CD8-positive, alpha-beta T cell (primary cell): ENCODE measurements at regions of chr2 and their contacts with region 1.

Region 1: DNA sequence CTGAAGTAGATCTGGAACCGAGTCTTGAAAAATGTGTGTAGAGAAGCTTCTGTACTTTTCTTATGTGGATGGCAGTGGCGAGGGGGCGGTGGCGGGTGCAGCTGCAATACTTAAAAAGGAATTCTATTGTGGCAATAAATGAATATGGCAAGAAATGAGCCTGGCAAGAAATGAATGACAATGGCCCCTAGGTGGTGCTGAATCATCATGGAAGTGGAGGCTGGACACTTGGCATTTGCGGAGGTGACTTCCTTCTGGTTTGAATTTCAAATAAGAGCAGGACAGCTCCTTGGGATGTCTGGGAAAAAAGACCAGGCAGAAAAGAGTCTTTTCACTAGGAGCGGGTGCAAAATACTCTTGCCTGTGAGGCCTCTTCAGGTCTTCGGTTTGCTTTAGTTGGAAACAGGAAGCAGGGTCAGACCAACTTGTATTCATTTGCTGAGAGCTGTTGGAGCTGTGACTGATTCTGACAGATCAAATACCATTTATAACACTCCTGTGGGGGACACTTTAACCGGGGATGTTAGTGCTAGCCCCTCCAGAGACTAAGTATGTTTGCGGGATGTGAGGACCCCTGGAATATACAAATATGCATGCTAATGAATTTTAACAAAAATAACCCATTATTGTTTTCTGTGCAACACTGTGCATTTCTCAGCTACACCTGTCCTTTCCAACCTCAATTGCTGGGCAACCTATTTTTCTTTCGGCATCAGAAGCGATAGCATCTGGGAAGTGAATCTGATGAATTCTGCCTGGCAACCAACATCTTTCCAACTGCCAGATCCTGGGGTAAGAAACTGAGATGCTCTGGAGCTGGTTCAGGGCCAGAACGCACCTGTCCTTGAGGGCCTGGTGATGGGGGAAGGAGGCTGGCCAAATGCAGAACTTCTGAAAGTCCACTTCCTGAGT is 35.4 kb downstream of the FASTKD2 start:
- DNase-seq: peak in 8 of 9 experiments; percentile 13 to 69 (median 43)
- ATAC-seq: peak; percentile 61
- H3K4me3 ChIP-seq: peak overlapping the region; percentile 7 to 17
- H3K4me3 Mint-ChIP-seq: peak overlapping the region; percentile 71
- H3K27ac ChIP-seq: no peak overlapping the region
- H3K27ac Mint-ChIP-seq: no peak overlapping the region
- H3K4me1 ChIP-seq: no peaks in the 10 kb centered on the region
- H3K4me1 Mint-ChIP-seq: peaks cover 18% of the 10 kb centered on the region
- H3K27me3 ChIP-seq: no peaks in the 10 kb centered on the region
- H3K27me3 Mint-ChIP-seq: no peaks in the 10 kb centered on the region
- CTCF ChIP-seq: peak; percentile 70

Region 2: GRCh38 chr2:206721256-206721920 is 79.4 kb before region 1 on chr2:
- CTCF ChIA-PET with region 1: no interaction called
- POLR2A ChIA-PET with region 1: no interaction called
- intact Hi-C with region 1: no loop called
- DNase-seq: no peak
- ATAC-seq: no peak
- H3K4me3 ChIP-seq: no peak overlapping the region
- H3K4me3 Mint-ChIP-seq: no peak overlapping the region
- H3K27ac ChIP-seq: no peak overlapping the region
- H3K27ac Mint-ChIP-seq: no peak overlapping the region
- H3K4me1 ChIP-seq: no peaks in the 10 kb centered on the region
- H3K4me1 Mint-ChIP-seq: no peaks in the 10 kb centered on the region
- H3K27me3 ChIP-seq: no peaks in the 10 kb centered on the region
- H3K27me3 Mint-ChIP-seq: peaks cover 21% of the 10 kb centered on the region
- CTCF ChIP-seq: no peak

Region 3: GRCh38 chr2:206790311-206790935 is 10.3 kb before region 1 on chr2:
- CTCF ChIA-PET with region 1: interaction called, 21 read pairs
- POLR2A ChIA-PET with region 1: no interaction called
- intact Hi-C with region 1: no loop called
- DNase-seq: no peak
- ATAC-seq: no peak
- H3K4me3 ChIP-seq: no peak overlapping the region
- H3K4me3 Mint-ChIP-seq: no peak overlapping the region
- H3K27ac ChIP-seq: no peak overlapping the region
- H3K27ac Mint-ChIP-seq: no peak overlapping the region
- H3K4me1 ChIP-seq: no peaks in the 10 kb centered on the region
- H3K4me1 Mint-ChIP-seq: no peaks in the 10 kb centered on the region
- H3K27me3 ChIP-seq: no peaks in the 10 kb centered on the region
- H3K27me3 Mint-ChIP-seq: no peaks in the 10 kb centered on the region
- CTCF ChIP-seq: no peak

Region 4: DNA sequence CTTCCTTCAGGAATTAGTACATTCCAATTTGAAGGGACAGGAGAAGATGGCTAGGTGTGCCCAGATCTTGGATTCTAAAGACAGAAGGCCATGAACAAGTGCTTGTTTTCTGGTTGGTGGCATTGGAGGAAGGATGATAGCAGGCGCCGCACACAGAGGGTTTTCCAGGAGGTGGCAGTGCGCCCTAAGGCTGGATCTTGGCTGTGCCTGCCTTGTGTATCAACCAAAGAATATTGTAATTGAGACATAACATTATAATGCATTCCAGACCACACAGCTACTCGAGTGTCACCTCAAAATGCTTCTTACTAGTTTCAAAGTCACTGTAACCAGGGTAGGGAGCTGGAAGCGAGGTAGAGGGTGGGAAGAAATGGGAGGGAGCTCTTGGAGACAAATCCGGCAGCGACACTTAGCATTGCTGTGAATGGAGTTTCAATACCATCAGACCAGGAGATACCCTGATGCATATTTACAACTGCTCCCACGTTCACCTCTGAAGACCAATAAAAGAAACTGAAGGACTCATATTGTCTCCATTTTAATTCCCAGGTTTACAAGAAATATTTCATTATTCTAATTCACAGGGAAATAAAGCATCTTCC is 181.1 kb after region 1 on chr2:
- CTCF ChIA-PET with region 1: interaction called, 5 read pairs
- POLR2A ChIA-PET with region 1: no interaction called
- intact Hi-C with region 1: loop called (anchors 5 kb)
- DNase-seq: peak; percentile 14 to 58 (median 42)
- ATAC-seq: peak; percentile 52
- H3K4me3 ChIP-seq: no peak overlapping the region
- H3K4me3 Mint-ChIP-seq: no peak overlapping the region
- H3K27ac ChIP-seq: no peak overlapping the region
- H3K27ac Mint-ChIP-seq: no peak overlapping the region
- H3K4me1 ChIP-seq: no peaks in the 10 kb centered on the region
- H3K4me1 Mint-ChIP-seq: no peaks in the 10 kb centered on the region
- H3K27me3 ChIP-seq: no peaks in the 10 kb centered on the region
- H3K27me3 Mint-ChIP-seq: no peaks in the 10 kb centered on the region
- CTCF ChIP-seq: no peak

Region 5: GRCh38 chr2:207046724-207047123 is 246.0 kb after region 1 on chr2:
- CTCF ChIA-PET with region 1: no interaction called
- POLR2A ChIA-PET with region 1: no interaction called
- intact Hi-C with region 1: loop called in 1 of 2 experiments (anchors 5 kb)
- DNase-seq: peak in 6 of 9 experiments; percentile 3 to 66 (median 12)
- ATAC-seq: peak; percentile 65
- H3K4me3 ChIP-seq: no peak overlapping the region
- H3K4me3 Mint-ChIP-seq: peak overlapping the region; percentile 24
- H3K27ac ChIP-seq: no peak overlapping the region
- H3K27ac Mint-ChIP-seq: no peak overlapping the region
- H3K4me1 ChIP-seq: peaks cover 9% of the 10 kb centered on the region
- H3K4me1 Mint-ChIP-seq: peaks cover 10% of the 10 kb centered on the region
- H3K27me3 ChIP-seq: no peaks in the 10 kb centered on the region
- H3K27me3 Mint-ChIP-seq: no peaks in the 10 kb centered on the region
- CTCF ChIP-seq: no peak

Region 6: DNA sequence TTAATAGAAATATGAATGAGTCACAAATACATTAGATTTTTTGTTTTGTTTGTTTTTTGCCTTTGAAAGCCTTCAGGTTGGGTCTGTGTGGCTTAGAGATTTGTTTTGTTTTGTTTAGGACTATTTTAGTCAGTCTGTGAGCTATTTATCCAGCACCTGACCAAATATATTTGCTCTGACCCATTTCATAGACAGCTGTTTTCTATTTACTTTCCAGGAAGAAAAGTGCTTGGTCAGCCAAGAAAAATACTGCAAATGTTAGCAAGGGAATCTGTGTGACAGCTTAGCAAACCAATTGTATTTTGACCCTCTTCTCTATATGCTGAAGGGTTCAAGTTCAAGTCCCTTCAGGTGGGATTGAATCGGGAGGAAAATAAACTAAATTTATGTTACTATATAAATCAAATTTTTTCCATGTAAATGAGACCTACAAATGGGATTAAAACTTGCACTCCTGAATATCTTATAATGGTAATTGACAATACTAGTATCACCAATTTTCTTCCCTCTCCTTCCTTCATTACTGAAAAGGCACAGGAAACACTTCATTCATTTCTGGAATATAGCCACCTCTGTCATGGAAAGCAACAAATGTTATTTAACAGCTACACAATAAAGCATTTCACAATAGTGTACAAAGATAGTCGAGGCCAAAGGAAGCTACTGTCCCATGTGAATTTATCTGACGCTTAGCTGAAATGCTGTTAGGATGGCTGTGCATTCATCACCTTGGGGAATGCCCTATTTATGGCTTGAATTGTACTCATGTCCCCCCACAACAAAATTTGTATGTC is 388.1 kb after region 1 on chr2:
- CTCF ChIA-PET with region 1: no interaction called
- POLR2A ChIA-PET with region 1: no interaction called
- intact Hi-C with region 1: no loop called
- DNase-seq: no peak
- ATAC-seq: no peak
- H3K4me3 ChIP-seq: no peak overlapping the region
- H3K4me3 Mint-ChIP-seq: no peak overlapping the region
- H3K27ac ChIP-seq: no peak overlapping the region
- H3K27ac Mint-ChIP-seq: no peak overlapping the region
- H3K4me1 ChIP-seq: no peaks in the 10 kb centered on the region
- H3K4me1 Mint-ChIP-seq: peaks cover 3% of the 10 kb centered on the region
- H3K27me3 ChIP-seq: no peaks in the 10 kb centered on the region
- H3K27me3 Mint-ChIP-seq: no peaks in the 10 kb centered on the region
- CTCF ChIP-seq: no peak

Region 7: DNA sequence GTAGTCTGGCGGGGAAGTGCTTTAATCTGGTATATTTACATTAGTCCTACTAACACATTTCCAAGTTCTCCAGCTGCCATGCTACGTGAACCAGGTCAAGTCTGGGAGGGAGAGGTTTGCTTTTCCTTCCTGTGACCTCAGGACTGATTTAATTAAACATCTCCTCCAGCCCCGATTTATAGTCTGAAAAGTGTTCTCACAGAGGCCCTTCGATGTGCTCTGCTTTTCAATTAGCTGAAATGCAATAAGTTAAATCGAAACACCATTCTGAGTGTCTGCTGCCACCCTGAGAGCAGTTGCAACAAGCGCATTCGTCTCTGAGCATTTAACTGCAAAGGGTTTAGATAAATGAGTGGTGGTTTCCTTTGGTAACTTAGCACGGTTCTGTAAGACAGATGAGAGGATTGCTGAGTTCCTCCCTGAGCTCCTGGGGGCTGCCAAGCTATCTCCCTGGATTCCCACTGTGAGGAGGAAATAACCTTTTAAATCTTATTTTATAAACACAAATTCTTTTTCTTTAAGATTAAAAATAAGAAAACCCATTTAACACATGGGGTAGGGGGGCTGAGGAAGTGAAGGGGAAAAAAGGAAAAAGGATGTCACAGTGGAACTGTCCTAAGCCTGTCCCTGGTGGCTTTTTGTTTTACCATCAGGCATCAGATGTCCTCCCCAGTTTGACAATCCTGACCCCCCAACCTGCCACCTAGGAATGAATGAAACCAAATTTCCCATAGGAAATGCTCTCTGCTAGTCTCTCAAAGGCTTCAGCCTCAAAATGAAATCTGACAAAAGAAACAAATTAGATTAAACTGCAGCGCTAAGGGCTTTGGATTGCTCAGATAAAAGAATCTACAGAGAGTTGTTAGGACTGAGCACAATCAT is 672.5 kb after region 1 on chr2:
- CTCF ChIA-PET with region 1: interaction called, 29 read pairs
- POLR2A ChIA-PET with region 1: no interaction called
- intact Hi-C with region 1: loop called (anchors 1 kb)
- DNase-seq: peak in 6 of 9 experiments; percentile 9 to 62 (median 37)
- ATAC-seq: peak; percentile 57
- H3K4me3 ChIP-seq: no peak overlapping the region
- H3K4me3 Mint-ChIP-seq: no peak overlapping the region
- H3K27ac ChIP-seq: no peak overlapping the region
- H3K27ac Mint-ChIP-seq: no peak overlapping the region
- H3K4me1 ChIP-seq: no peaks in the 10 kb centered on the region
- H3K4me1 Mint-ChIP-seq: peaks cover 13% of the 10 kb centered on the region
- H3K27me3 ChIP-seq: no peaks in the 10 kb centered on the region
- H3K27me3 Mint-ChIP-seq: no peaks in the 10 kb centered on the region
- CTCF ChIP-seq: peak; percentile 33